CD4-positive, alpha-beta memory T cell (primary cell): ENCODE measurements at regions of chr2 and their contacts with region 1.

Region 1: GRCh38 chr2:64831134-64831976 is 157.8 kb upstream of the SLC1A4 start:
- DNase-seq: peak; percentile 74 to 90 (median 75)
- H3K4me3 ChIP-seq: peak overlapping the region; percentile 22 to 48
- H3K4me3 Mint-ChIP-seq: peak overlapping the region; percentile 19 to 78 (median 66)
- H3K27ac ChIP-seq: no peak overlapping the region
- H3K27ac Mint-ChIP-seq: peak overlapping the region in 5 of 7 donors; percentile 31 to 72 (median 45)
- H3K4me1 ChIP-seq: peaks cover 10% of the 10 kb centered on the region
- H3K4me1 Mint-ChIP-seq: peaks cover 2 to 12% (median 8%) of the 10 kb centered on the region in 4 donors
- H3K27me3 ChIP-seq: no peaks in the 10 kb centered on the region
- H3K27me3 Mint-ChIP-seq: peaks cover 2 to 3% of the 10 kb centered on the region in 2 donors

Region 2: GRCh38 chr2:64586883-64587481 is 244.4 kb before region 1 on chr2:
- CTCF ChIA-PET with region 1: interaction called, 15 read pairs
- POLR2A ChIA-PET with region 1: no interaction called
- intact Hi-C with region 1: loop called (anchors 1 kb)
- DNase-seq: peak in 4 of 5 donors; percentile 26 to 46 (median 38)
- H3K4me3 ChIP-seq: no peak overlapping the region
- H3K4me3 Mint-ChIP-seq: no peak overlapping the region
- H3K27ac ChIP-seq: no peak overlapping the region
- H3K27ac Mint-ChIP-seq: no peak overlapping the region
- H3K4me1 ChIP-seq: no peaks in the 10 kb centered on the region
- H3K4me1 Mint-ChIP-seq: peaks cover 0 to 4% (median 2%) of the 10 kb centered on the region in 4 donors
- H3K27me3 ChIP-seq: no peaks in the 10 kb centered on the region
- H3K27me3 Mint-ChIP-seq: no peaks in the 10 kb centered on the region

Region 3: DNA sequence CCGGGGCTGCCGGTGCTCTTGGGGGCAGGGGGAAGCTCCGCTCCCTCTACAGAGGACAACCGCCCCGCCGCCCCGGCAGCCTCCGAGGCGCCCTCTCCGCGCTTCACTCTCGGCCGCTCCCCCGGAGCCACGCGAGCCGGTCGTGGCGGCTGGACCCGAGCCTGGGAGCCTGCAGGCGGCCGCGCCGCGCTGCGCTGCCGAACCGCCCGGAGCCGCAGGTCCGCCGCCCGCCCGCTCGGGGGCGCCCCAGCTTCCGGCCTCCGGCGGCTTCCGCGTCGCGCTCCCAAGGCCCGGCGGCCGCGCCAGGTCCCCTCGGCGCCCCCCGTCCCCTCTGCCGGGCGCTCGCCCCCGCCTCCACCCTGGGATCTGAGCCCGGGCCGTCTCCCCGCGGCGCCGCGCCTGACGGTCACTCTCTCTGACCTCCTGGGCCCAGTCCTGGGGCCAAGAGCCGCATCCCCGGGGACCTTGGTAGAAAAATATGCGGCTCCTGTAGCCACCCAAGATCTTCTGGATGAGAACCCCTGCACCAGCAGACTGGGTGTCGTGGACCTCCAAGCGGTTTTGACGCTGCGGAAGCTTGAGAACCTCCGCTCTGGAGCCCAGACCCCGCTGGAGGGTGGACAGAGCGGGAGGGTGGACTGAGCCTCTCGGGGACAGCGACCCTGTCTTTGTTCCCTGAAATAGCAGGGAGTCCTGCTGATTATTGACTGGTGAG is 222.0 kb before region 1 on chr2:
- CTCF ChIA-PET with region 1: interaction called, 10 read pairs
- POLR2A ChIA-PET with region 1: interaction called, 9 read pairs
- intact Hi-C with region 1: no loop called
- DNase-seq: peak; percentile 58 to 79 (median 76)
- H3K4me3 ChIP-seq: peak overlapping the region in 1 of 2 donors; percentile 61
- H3K4me3 Mint-ChIP-seq: peak overlapping the region; percentile 64 to 79 (median 75)
- H3K27ac ChIP-seq: peak overlapping the region; percentile 57
- H3K27ac Mint-ChIP-seq: peak overlapping the region; percentile 35 to 83 (median 70)
- H3K4me1 ChIP-seq: peaks cover 38% of the 10 kb centered on the region
- H3K4me1 Mint-ChIP-seq: peaks cover 10 to 33% (median 22%) of the 10 kb centered on the region in 4 donors
- H3K27me3 ChIP-seq: no peaks in the 10 kb centered on the region
- H3K27me3 Mint-ChIP-seq: no peaks in the 10 kb centered on the region

Region 4: GRCh38 chr2:64698668-64699444 is 132.5 kb before region 1 on chr2:
- CTCF ChIA-PET with region 1: no interaction called
- POLR2A ChIA-PET with region 1: no interaction called
- intact Hi-C with region 1: no loop called
- DNase-seq: no peak
- H3K4me3 ChIP-seq: no peak overlapping the region
- H3K4me3 Mint-ChIP-seq: peak overlapping the region in 5 of 8 donors; percentile 9 to 53 (median 22)
- H3K27ac ChIP-seq: no peak overlapping the region
- H3K27ac Mint-ChIP-seq: peak overlapping the region in 3 of 7 donors; percentile 2 to 34 (median 22)
- H3K4me1 ChIP-seq: peaks cover 36% of the 10 kb centered on the region
- H3K4me1 Mint-ChIP-seq: peaks cover 21 to 41% (median 30%) of the 10 kb centered on the region in 4 donors
- H3K27me3 ChIP-seq: no peaks in the 10 kb centered on the region
- H3K27me3 Mint-ChIP-seq: no peaks in the 10 kb centered on the region

Region 5: GRCh38 chr2:64767670-64768468 is 63.5 kb before region 1 on chr2:
- CTCF ChIA-PET with region 1: interaction called, 17 read pairs
- POLR2A ChIA-PET with region 1: interaction called, 10 read pairs
- intact Hi-C with region 1: loop called (anchors 1 kb)
- DNase-seq: peak; percentile 66 to 86 (median 69)
- H3K4me3 ChIP-seq: peak overlapping the region; percentile 47 to 72
- H3K4me3 Mint-ChIP-seq: peak overlapping the region; percentile 86 to 99 (median 94)
- H3K27ac ChIP-seq: peak overlapping the region; percentile 90
- H3K27ac Mint-ChIP-seq: peak overlapping the region; percentile 81 to 97 (median 96)
- H3K4me1 ChIP-seq: peaks cover 14% of the 10 kb centered on the region
- H3K4me1 Mint-ChIP-seq: peaks cover 12 to 23% (median 13%) of the 10 kb centered on the region in 4 donors
- H3K27me3 ChIP-seq: no peaks in the 10 kb centered on the region
- H3K27me3 Mint-ChIP-seq: no peaks in the 10 kb centered on the region

Region 6: DNA sequence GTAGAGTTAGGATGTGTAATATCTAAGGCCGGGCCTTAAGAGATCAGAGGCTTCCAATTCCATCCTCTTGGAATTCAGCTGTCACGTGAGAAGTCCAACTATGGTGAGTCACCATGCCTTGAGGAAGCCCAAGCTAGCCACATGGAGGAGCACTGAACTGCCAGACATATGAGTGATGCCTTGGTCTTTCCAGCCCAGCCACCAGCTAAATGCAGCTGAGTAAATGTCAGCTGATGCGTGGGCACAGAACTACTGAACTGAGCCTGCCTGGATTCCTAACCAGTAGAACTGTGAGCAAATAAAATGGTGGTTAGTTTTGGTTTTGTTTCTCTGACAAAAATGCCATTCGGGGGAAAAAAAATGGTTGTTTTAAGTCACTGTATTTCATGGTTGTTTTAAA is 23.9 kb before region 1 on chr2:
- CTCF ChIA-PET with region 1: interaction called, 10 read pairs
- POLR2A ChIA-PET with region 1: no interaction called
- intact Hi-C with region 1: no loop called
- DNase-seq: no peak
- H3K4me3 ChIP-seq: no peak overlapping the region
- H3K4me3 Mint-ChIP-seq: no peak overlapping the region
- H3K27ac ChIP-seq: no peak overlapping the region
- H3K27ac Mint-ChIP-seq: peak overlapping the region in 1 of 7 donors; percentile 7
- H3K4me1 ChIP-seq: peaks cover 5% of the 10 kb centered on the region
- H3K4me1 Mint-ChIP-seq: peaks cover 5 to 8% (median 8%) of the 10 kb centered on the region in 4 donors
- H3K27me3 ChIP-seq: no peaks in the 10 kb centered on the region
- H3K27me3 Mint-ChIP-seq: no peaks in the 10 kb centered on the region

Region 7: DNA sequence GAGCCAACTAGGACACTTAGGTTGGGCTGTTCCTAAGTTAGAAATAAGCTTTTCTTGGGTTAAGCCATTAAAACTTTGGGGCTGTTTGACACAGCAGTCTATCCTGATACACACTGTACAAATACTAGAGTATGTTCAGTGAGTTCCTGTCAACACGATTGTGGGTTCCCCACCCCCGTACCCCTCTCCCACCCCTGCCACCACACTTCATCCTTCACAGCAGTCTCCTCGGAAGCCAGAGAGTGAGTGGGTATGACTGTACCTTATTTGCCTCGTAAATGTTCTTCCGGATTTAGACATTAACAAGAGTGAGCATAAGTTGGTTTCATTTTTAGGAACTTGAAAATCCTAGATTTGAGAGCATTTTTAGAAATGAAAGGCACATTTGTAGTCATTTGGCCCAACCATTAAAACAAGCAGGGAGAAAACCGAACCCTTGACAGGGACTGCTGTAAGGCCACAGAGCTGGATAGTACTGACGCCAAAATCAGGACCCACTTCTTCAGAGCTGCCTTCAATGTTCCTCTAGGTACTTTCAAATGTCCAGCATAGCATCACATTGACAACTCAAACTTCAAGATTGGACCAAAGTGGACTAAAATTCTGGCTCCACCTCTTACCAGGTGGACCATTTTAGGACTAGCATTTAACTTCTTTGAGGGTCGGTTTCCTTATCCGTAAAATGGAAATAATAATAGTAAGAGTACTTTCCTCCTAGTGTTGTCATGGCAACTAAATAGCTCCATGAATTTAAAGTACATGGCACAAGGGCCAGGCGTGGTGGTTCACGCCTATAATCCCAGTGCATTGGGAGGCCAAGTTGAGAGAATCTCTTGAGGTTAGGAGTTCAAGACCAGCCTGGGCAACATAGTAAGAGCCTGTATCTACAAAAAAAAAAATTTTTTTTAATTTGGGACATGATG is 11.3 kb before region 1 on chr2:
- CTCF ChIA-PET with region 1: interaction called, 24 read pairs
- POLR2A ChIA-PET with region 1: interaction called, 9 read pairs
- intact Hi-C with region 1: loop called (anchors 1 kb)
- DNase-seq: peak; percentile 52 to 67 (median 64)
- H3K4me3 ChIP-seq: peak overlapping the region in 1 of 2 donors; percentile 29
- H3K4me3 Mint-ChIP-seq: peak overlapping the region; percentile 66 to 93 (median 80)
- H3K27ac ChIP-seq: peak overlapping the region; percentile 44
- H3K27ac Mint-ChIP-seq: peak overlapping the region; percentile 72 to 98 (median 92)
- H3K4me1 ChIP-seq: peaks cover 23% of the 10 kb centered on the region
- H3K4me1 Mint-ChIP-seq: peaks cover 15 to 34% (median 21%) of the 10 kb centered on the region in 4 donors
- H3K27me3 ChIP-seq: no peaks in the 10 kb centered on the region
- H3K27me3 Mint-ChIP-seq: peaks cover 0 to 2% of the 10 kb centered on the region in 2 donors

Region 8: DNA sequence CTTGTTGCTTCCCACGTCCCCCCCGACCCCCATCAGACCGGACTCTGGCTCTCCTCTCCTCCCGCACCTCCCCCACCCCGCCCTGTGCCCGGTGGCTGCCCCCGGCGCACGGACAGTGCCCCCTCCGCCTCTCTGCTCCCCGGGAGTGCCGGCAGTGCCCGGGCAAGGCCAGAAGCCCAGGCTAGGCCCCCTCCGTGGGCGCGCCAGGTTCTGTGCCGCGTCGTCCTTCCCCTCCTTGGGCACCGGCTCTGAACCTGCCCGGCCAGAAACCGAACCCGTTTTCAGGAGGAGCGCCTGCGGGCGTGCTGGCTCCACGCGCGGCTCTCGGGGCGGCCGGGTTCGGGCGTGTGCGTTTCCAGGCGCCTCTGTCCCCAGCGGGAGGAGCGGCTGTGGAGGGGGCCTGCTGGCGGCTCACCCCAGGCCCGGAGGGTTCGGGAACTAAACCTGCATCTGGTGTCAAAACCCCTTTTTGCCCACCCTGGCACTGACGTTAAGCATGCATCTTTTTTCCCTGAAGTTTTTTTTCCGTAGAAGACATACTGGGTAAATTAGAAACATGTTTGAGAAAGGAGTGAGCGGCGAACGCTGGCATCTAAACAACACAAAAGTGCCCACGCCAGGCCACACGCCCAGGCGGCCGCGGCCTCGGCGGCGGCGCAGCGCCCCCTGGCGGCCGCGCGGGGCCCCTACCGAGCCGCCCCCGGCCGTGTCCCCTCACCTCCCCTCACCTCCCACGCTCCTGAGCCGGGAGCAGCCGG is 33.9 kb after region 1 on chr2:
- CTCF ChIA-PET with region 1: interaction called, 3 read pairs
- POLR2A ChIA-PET with region 1: interaction called, 4 read pairs
- intact Hi-C with region 1: loop called (anchors 2 kb)
- DNase-seq: peak in 4 of 5 donors; percentile 69 to 75 (median 70)
- H3K4me3 ChIP-seq: peak overlapping the region in 1 of 2 donors; percentile 60
- H3K4me3 Mint-ChIP-seq: peak overlapping the region; percentile 79 to 88 (median 82)
- H3K27ac ChIP-seq: no peak overlapping the region
- H3K27ac Mint-ChIP-seq: peak overlapping the region in 1 of 7 donors; percentile 64
- H3K4me1 ChIP-seq: peaks cover 10% of the 10 kb centered on the region
- H3K4me1 Mint-ChIP-seq: peaks cover 0 to 3% (median under 1%) of the 10 kb centered on the region in 4 donors
- H3K27me3 ChIP-seq: no peaks in the 10 kb centered on the region
- H3K27me3 Mint-ChIP-seq: peaks cover 2 to 3% of the 10 kb centered on the region in 2 donors